ENCODE measurements at regions of chr10 and their contacts with region 1.

Region 1: DNA sequence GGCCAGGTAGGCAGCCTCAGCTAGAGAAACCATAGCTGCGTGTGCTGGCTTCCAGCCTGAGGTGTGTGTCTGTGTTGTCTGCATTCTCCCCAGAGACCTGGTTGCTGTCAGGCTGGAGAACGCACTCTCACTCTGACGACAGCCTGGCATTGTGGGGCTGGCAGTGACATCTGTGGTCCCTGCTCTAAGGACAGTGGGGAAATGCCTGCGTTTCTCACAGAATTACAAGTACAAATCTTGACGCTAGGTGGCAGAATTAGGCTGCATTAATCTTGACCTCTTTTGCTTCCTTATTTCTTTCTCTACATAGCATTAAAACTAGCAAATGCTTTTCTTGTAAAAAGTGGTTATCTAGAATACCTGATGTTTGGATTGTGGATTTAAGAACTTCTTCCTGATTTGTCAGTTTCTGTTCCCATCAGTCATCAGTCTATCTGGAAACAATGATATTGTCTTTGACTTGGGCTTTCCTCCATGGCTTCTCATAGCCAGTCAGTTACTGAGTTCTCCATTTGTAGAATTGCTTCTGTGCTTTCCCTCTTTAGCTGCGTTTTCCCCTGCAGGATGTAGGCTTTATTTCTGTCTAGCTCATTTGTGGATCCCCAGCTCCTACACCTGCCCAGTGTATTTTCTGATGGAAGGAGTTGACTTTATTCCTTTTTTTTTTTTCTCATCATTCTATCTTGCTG is 86.0 kb downstream of the FANK1 start:
- DNase-seq: peak; percentile 41
- ATAC-seq: peak; percentile 75
- H3K4me3 ChIP-seq: no peak overlapping the region
- H3K27ac ChIP-seq: no peak overlapping the region
- H3K4me1 ChIP-seq: no peaks in the 10 kb centered on the region
- H3K27me3 ChIP-seq: peaks cover 3 to 21% of the 10 kb centered on the region in 2 experiments
- CTCF ChIP-seq: peak; percentile 73
- EP300 ChIP-seq: no peak
- POLR2A ChIP-seq: no peak
- RAD21 ChIP-seq: 0 out of 2 replicates have a peak, but pooled peaks have one; percentile 40

Region 2: GRCh38 chr10:125868372-125868975 is 113.9 kb before region 1 on chr10:
- CTCF ChIA-PET with region 1: no interaction called
- POLR2A ChIA-PET with region 1: no interaction called
- in situ Hi-C with region 1: no loop called
- intact Hi-C with region 1: loop called (anchors 5 kb)
- DNase-seq: peak; percentile 48
- ATAC-seq: peak; percentile 66
- H3K4me3 ChIP-seq: no peak overlapping the region
- H3K27ac ChIP-seq: no peak overlapping the region
- H3K4me1 ChIP-seq: no peaks in the 10 kb centered on the region
- H3K27me3 ChIP-seq: no peaks in the 10 kb centered on the region
- CTCF ChIP-seq: peak; percentile 71
- EP300 ChIP-seq: no peak
- POLR2A ChIP-seq: no peak
- RAD21 ChIP-seq: no peak

Region 3: GRCh38 chr10:126387023-126387921 is 404.9 kb after region 1 on chr10:
- CTCF ChIA-PET with region 1: interaction called, 3 read pairs
- POLR2A ChIA-PET with region 1: no interaction called
- in situ Hi-C with region 1: loop called (anchors 25 kb)
- intact Hi-C with region 1: loop called (anchors 1 kb)
- DNase-seq: no peak
- ATAC-seq: peak; percentile 69
- H3K4me3 ChIP-seq: no peak overlapping the region
- H3K27ac ChIP-seq: no peak overlapping the region
- H3K4me1 ChIP-seq: no peaks in the 10 kb centered on the region
- H3K27me3 ChIP-seq: peaks cover 0 to 26% of the 10 kb centered on the region in 2 experiments; a peak in 4 of 5 replicates
- CTCF ChIP-seq: peak; percentile 39
- EP300 ChIP-seq: no peak
- POLR2A ChIP-seq: no peak
- RAD21 ChIP-seq: peak; percentile 21; the same call in 1 of the 2 replicates

Region 4: GRCh38 chr10:126504063-126504739 is 521.8 kb after region 1 on chr10:
- CTCF ChIA-PET with region 1: interaction called, 16 read pairs
- POLR2A ChIA-PET with region 1: no interaction called
- in situ Hi-C with region 1: no loop called
- intact Hi-C with region 1: no loop called
- DNase-seq: peak; percentile 59
- ATAC-seq: peak; percentile 93
- H3K4me3 ChIP-seq: no peak overlapping the region
- H3K27ac ChIP-seq: no peak overlapping the region
- H3K4me1 ChIP-seq: no peaks in the 10 kb centered on the region
- H3K27me3 ChIP-seq: peaks cover 2 to 3% of the 10 kb centered on the region in 2 experiments; a peak in 2 of 5 replicates
- CTCF ChIP-seq: peak; percentile 76
- EP300 ChIP-seq: no peak
- POLR2A ChIP-seq: no peak
- RAD21 ChIP-seq: peak; percentile 51; the same call in 1 of the 2 replicates

Region 5: DNA sequence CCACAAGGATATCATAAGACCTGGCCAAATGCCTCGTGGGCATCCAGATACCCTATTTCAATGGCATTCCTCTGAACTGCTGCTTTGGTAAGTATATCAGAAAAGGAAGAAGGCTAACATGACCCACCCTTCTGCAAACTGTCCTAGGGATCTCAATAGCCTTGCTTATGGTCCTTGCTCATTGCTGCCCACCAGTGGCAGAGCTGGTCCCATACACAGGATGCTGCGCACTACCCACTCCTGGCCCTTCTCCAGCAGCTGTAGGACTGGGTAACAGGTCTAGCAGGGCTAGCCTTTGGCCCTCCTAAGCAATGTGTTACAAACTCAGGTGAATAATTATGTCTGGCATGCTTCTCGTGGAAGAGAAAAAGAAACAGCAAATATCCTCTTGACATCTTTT is 615.6 kb after region 1 on chr10:
- CTCF ChIA-PET with region 1: no interaction called
- POLR2A ChIA-PET with region 1: no interaction called
- in situ Hi-C with region 1: no loop called
- intact Hi-C with region 1: loop called (anchors 1 kb)
- DNase-seq: peak; percentile 32
- ATAC-seq: peak; percentile 94
- H3K4me3 ChIP-seq: no peak overlapping the region
- H3K27ac ChIP-seq: no peak overlapping the region
- H3K4me1 ChIP-seq: no peaks in the 10 kb centered on the region
- H3K27me3 ChIP-seq: peaks cover 0 to 3% of the 10 kb centered on the region in 2 experiments; a peak in 1 of 5 replicates
- CTCF ChIP-seq: peak; percentile 66
- EP300 ChIP-seq: no peak
- POLR2A ChIP-seq: no peak
- RAD21 ChIP-seq: no peak

Region 6: GRCh38 chr10:126749015-126749655 is 766.7 kb after region 1 on chr10:
- CTCF ChIA-PET with region 1: interaction called, 7 read pairs
- POLR2A ChIA-PET with region 1: no interaction called
- in situ Hi-C with region 1: loop called (anchors 10 kb)
- intact Hi-C with region 1: loop called (anchors 5 kb)
- DNase-seq: peak; percentile 59
- ATAC-seq: peak; percentile 98
- H3K4me3 ChIP-seq: no peak overlapping the region
- H3K27ac ChIP-seq: no peak overlapping the region
- H3K4me1 ChIP-seq: no peaks in the 10 kb centered on the region
- H3K27me3 ChIP-seq: no peaks in the 10 kb centered on the region; a peak in 1 of 5 replicates
- CTCF ChIP-seq: peak; percentile 84
- EP300 ChIP-seq: no peak
- POLR2A ChIP-seq: no peak
- RAD21 ChIP-seq: peak; percentile 19; the same call in 1 of the 2 replicates

Measured in HepG2 (cell line).